ENCODE measurements at regions of chr7 and their contacts with region 1.

Region 1: GRCh38 chr7:5477723-5478531 is 54.3 kb upstream of the TNRC18 start:
- DNase-seq: no peak
- ATAC-seq: peak; percentile 36 to 66 (median 55)
- H3K4me3 ChIP-seq: peak overlapping the region in 1 of 3 donors; percentile 21
- H3K27ac ChIP-seq: no peak overlapping the region
- H3K4me1 ChIP-seq: no peaks in the 10 kb centered on the region
- H3K27me3 ChIP-seq: no peaks in the 10 kb centered on the region
- CTCF ChIP-seq: no peak
- POLR2A ChIP-seq: no peak

Region 2: DNA sequence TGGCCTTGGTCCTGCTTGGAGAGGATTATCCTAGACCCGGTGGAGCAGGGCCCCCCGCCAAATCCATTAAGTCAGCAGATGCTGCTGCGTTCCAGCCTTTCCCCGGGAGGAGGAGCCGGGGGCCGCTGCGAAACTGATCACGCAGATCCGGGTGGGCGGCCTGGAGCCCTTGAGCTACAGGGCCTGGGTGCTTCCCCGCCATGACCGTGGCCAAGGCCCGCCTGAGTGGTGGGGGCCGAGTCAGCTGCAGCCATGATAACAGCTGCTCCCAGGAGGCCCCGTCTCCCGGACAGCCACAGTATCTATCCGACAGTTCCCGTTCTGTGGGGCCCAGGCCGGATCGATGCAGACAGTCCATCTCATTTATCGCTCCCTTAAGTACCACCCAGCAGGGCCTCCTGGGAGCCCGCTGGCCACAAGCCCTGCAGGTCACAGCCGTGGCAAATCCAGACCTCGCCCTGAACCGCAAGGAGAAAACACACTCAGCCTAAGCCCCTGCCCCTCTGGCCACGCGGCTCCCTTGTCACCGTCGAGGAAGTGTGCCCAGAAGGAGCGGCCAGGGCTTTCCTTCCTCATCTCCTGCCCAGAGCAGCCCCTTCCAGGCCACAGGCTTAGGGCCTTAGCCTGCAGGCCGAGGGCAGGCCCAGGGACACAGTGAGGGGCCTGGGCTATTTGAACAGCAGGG is 229.6 kb before region 1 on chr7:
- intact Hi-C with region 1: loop called in 1 of 2 experiments (anchors 10 kb)
- DNase-seq: peak in 1 of 3 donors; percentile 31
- ATAC-seq: peak; percentile 30 to 54 (median 43)
- H3K4me3 ChIP-seq: no peak overlapping the region
- H3K27ac ChIP-seq: no peak overlapping the region
- H3K4me1 ChIP-seq: no peaks in the 10 kb centered on the region
- H3K27me3 ChIP-seq: no peaks in the 10 kb centered on the region
- CTCF ChIP-seq: no peak
- POLR2A ChIP-seq: no peak

Measured in right lobe of liver (tissue), 6 donors.